ENCODE measurements at regions of chr7 and their contacts with region 1.

Region 1: DNA sequence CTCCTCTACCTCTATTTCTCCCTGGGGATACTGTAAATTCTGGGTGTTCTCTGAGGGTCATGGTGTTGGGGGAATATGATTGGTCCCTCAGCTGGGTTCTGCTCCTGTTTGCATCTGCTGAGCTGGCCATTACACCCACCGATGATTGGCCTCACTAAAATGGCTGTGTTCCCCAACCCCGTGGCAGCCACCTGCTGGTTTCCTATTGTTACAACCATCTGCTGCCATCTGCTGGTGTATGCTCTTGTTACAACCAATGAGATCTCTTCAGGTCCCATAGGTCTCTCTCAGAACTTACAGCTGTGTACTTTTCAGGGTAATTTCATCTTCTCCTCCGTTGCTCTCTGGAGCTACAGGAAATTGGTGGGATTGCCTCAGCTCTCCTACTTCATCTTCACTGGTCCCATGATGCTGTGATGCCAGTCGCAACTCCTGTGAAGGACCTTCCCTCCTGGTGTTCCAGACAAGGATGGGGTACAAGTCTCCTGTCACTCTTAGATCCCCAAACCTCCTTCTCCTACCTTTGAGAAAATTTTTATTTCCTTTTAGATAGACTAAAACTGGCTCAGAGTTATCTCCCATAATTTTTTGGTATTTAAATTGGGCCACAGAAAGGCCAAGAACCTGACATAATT is 303.5 kb upstream of the SMIM30 start:
- DNase-seq: peak; percentile 26
- ATAC-seq: peak; percentile 100
- H3K4me3 ChIP-seq: no peak overlapping the region
- H3K27ac ChIP-seq: no peak overlapping the region
- H3K4me1 ChIP-seq: no peaks in the 10 kb centered on the region
- H3K27me3 ChIP-seq: no peaks in the 10 kb centered on the region
- CTCF ChIP-seq: peak; percentile 85 to 96 (median 86)
- EP300 ChIP-seq: no peak
- POLR2A ChIP-seq: no peak
- RAD21 ChIP-seq: peak; percentile 84

Region 2: GRCh38 chr7:111741811-111742240 is 1680.0 kb before region 1 on chr7:
- CTCF ChIA-PET with region 1: no interaction called
- POLR2A ChIA-PET with region 1: no interaction called
- RAD21 ChIA-PET with region 1: no interaction called
- SMC1A ChIA-PET with region 1: no interaction called
- in situ Hi-C with region 1: loop called (anchors 10 kb)
- intact Hi-C with region 1: loop called (anchors 5 kb)
- DNase-seq: peak; percentile 31
- ATAC-seq: peak; percentile 97
- H3K4me3 ChIP-seq: no peak overlapping the region
- H3K27ac ChIP-seq: no peak overlapping the region
- H3K4me1 ChIP-seq: no peaks in the 10 kb centered on the region
- H3K27me3 ChIP-seq: no peaks in the 10 kb centered on the region
- CTCF ChIP-seq: peak; percentile 63 to 82 (median 68)
- EP300 ChIP-seq: no peak
- POLR2A ChIP-seq: no peak
- RAD21 ChIP-seq: peak; percentile 74

Region 3: DNA sequence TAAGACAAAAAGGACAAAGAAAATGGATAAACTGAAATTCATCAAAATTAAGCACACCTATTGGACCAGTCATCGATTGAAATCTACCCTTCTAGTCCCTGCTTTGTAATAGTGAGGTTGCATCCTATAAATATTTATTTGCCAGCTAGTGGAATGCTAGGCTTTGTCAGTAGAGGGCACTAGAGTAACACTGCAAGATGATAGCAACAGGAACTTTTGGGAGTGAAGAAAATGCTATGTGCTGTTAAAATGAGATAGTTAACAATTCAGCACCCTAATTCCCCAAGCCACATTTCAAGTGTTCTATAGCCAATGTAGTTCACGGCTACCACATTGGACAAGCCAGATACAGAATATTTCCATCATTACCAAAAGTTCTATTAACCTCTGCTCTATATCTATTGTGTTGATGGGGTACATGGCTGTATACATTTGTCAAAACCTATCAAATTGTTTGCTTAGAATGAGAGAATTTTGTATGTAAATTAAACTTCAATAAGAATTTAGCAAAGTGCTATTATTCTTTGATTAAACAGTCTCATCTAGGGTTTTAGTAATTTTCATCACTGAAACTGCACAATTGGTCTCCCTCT is 871.2 kb before region 1 on chr7:
- CTCF ChIA-PET with region 1: interaction called, 32 read pairs
- POLR2A ChIA-PET with region 1: no interaction called
- RAD21 ChIA-PET with region 1: interaction called, 15 read pairs
- SMC1A ChIA-PET with region 1: interaction called, 11 read pairs
- in situ Hi-C with region 1: loop called (anchors 5 kb)
- intact Hi-C with region 1: loop called (anchors 1 kb)
- DNase-seq: peak; percentile 23
- ATAC-seq: peak; percentile 90
- H3K4me3 ChIP-seq: no peak overlapping the region
- H3K27ac ChIP-seq: no peak overlapping the region
- H3K4me1 ChIP-seq: no peaks in the 10 kb centered on the region
- H3K27me3 ChIP-seq: no peaks in the 10 kb centered on the region; a peak in 1 of 4 replicates
- CTCF ChIP-seq: peak; percentile 84 to 94 (median 87)
- EP300 ChIP-seq: no peak
- POLR2A ChIP-seq: no peak
- RAD21 ChIP-seq: peak; percentile 100

Region 4: DNA sequence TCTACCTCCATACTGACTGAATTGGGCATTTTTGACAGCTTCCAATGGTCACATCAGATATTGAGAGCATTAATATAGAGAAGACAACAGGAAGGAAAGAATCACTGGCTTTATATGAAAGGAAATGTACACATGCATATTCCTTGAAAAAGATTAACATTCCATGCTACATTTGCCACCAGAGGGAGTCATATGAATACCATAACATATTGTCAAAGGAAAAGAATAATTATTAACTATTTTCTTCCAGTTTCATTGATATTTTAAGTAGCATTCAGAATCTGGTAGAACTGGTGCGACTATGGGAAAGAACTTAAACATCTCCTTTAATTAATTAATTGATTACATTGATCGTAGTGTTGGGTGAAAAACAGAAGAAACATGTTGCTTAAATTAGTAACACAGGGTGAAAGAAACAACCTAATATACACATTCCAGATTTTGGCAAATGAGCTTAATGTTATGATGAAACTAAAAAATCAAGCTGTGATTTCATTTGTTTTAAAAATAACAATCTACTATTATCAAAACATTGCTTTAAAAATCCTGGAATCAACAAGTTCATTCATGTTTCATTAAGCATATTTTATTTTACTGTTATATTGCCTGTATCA is 406.7 kb before region 1 on chr7:
- CTCF ChIA-PET with region 1: interaction called, 3 read pairs
- POLR2A ChIA-PET with region 1: no interaction called
- RAD21 ChIA-PET with region 1: interaction called, 3 read pairs
- SMC1A ChIA-PET with region 1: interaction called, 3 read pairs
- in situ Hi-C with region 1: no loop called
- intact Hi-C with region 1: loop called (anchors 1 kb)
- DNase-seq: no peak
- ATAC-seq: no peak
- H3K4me3 ChIP-seq: no peak overlapping the region
- H3K27ac ChIP-seq: no peak overlapping the region
- H3K4me1 ChIP-seq: no peaks in the 10 kb centered on the region
- H3K27me3 ChIP-seq: no peaks in the 10 kb centered on the region
- CTCF ChIP-seq: peak in 1 of 3 experiments; percentile 12; a peak in 2 of 6 replicates
- EP300 ChIP-seq: no peak
- POLR2A ChIP-seq: no peak
- RAD21 ChIP-seq: 0 out of 2 replicates have a peak, but pooled peaks have one; percentile 18

Region 5: GRCh38 chr7:113159746-113160339 is 262.0 kb before region 1 on chr7:
- CTCF ChIA-PET with region 1: interaction called, 63 read pairs
- POLR2A ChIA-PET with region 1: no interaction called
- RAD21 ChIA-PET with region 1: no interaction called
- SMC1A ChIA-PET with region 1: interaction called, 17 read pairs
- in situ Hi-C with region 1: loop called (anchors 10 kb)
- intact Hi-C with region 1: loop called (anchors 1 kb)
- DNase-seq: no peak
- ATAC-seq: peak; percentile 92
- H3K4me3 ChIP-seq: no peak overlapping the region
- H3K27ac ChIP-seq: no peak overlapping the region
- H3K4me1 ChIP-seq: no peaks in the 10 kb centered on the region
- H3K27me3 ChIP-seq: no peaks in the 10 kb centered on the region
- CTCF ChIP-seq: peak; percentile 58 to 71 (median 62); a peak in 5 of 6 replicates
- EP300 ChIP-seq: no peak
- POLR2A ChIP-seq: no peak
- RAD21 ChIP-seq: peak; percentile 44

Region 6: GRCh38 chr7:113379746-113380145 is 42.1 kb before region 1 on chr7:
- CTCF ChIA-PET with region 1: no interaction called
- POLR2A ChIA-PET with region 1: no interaction called
- RAD21 ChIA-PET with region 1: no interaction called
- SMC1A ChIA-PET with region 1: no interaction called
- in situ Hi-C with region 1: no loop called
- intact Hi-C with region 1: no loop called
- DNase-seq: no peak
- ATAC-seq: no peak
- H3K4me3 ChIP-seq: no peak overlapping the region
- H3K27ac ChIP-seq: no peak overlapping the region
- H3K4me1 ChIP-seq: no peaks in the 10 kb centered on the region
- H3K27me3 ChIP-seq: no peaks in the 10 kb centered on the region
- CTCF ChIP-seq: no peak
- EP300 ChIP-seq: no peak
- POLR2A ChIP-seq: no peak
- RAD21 ChIP-seq: no peak

Region 7: GRCh38 chr7:113404245-113404644 is 17.6 kb before region 1 on chr7:
- CTCF ChIA-PET with region 1: interaction called, 35 read pairs
- POLR2A ChIA-PET with region 1: no interaction called
- RAD21 ChIA-PET with region 1: interaction called, 9 read pairs
- SMC1A ChIA-PET with region 1: interaction called, 6 read pairs
- in situ Hi-C with region 1: no loop called
- intact Hi-C with region 1: no loop called
- DNase-seq: no peak
- ATAC-seq: peak; percentile 76
- H3K4me3 ChIP-seq: no peak overlapping the region
- H3K27ac ChIP-seq: no peak overlapping the region
- H3K4me1 ChIP-seq: no peaks in the 10 kb centered on the region
- H3K27me3 ChIP-seq: no peaks in the 10 kb centered on the region
- CTCF ChIP-seq: peak; percentile 17 to 36 (median 30); a peak in 3 of 6 replicates
- EP300 ChIP-seq: no peak
- POLR2A ChIP-seq: no peak
- RAD21 ChIP-seq: 0 out of 2 replicates have a peak, but pooled peaks have one; percentile 23

Region 8: DNA sequence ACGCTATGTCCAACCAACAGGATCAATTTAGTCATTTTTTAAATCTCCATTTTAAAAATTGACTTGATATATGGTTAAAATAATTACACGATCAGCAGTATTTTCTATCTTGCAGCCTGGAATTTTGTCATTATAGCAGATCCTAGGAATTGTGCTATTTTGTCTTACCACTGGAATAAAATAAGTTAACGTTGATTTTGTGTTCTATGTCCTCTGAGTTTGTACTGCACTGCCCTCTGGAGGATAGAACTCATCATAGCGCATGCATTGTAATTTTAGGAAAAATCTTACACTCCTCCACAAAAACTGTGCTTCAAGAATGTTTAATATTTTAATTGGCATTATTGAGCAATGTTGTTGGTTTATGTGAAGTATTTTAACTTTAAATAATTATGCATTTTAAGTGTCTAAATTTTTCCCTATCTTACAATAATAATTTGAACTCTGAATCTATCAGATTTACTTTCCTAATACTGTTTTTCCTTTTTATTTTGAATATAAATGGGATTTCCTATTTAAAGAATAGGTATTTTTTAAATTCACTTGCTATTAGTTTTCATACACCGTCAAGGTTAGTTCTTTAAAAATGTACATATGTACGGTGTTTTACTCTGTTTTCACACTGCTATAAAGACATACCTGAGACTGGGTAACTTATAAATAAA is 276.9 kb after region 1 on chr7:
- CTCF ChIA-PET with region 1: no interaction called
- POLR2A ChIA-PET with region 1: no interaction called
- RAD21 ChIA-PET with region 1: no interaction called
- SMC1A ChIA-PET with region 1: interaction called, 3 read pairs
- in situ Hi-C with region 1: no loop called
- intact Hi-C with region 1: loop called (anchors 5 kb)
- DNase-seq: no peak
- ATAC-seq: peak; percentile 58; the same call in 1 of the 3 replicates
- H3K4me3 ChIP-seq: no peak overlapping the region
- H3K27ac ChIP-seq: no peak overlapping the region
- H3K4me1 ChIP-seq: no peaks in the 10 kb centered on the region
- H3K27me3 ChIP-seq: no peaks in the 10 kb centered on the region
- CTCF ChIP-seq: peak; percentile 58 to 68 (median 64); a peak in 5 of 6 replicates
- EP300 ChIP-seq: no peak
- POLR2A ChIP-seq: no peak
- RAD21 ChIP-seq: peak; percentile 69

Measured in GM12878 (cell line).